HAP-1 (cell line): ENCODE measurements at regions of chr10 and their contacts with region 1.

Region 1: DNA sequence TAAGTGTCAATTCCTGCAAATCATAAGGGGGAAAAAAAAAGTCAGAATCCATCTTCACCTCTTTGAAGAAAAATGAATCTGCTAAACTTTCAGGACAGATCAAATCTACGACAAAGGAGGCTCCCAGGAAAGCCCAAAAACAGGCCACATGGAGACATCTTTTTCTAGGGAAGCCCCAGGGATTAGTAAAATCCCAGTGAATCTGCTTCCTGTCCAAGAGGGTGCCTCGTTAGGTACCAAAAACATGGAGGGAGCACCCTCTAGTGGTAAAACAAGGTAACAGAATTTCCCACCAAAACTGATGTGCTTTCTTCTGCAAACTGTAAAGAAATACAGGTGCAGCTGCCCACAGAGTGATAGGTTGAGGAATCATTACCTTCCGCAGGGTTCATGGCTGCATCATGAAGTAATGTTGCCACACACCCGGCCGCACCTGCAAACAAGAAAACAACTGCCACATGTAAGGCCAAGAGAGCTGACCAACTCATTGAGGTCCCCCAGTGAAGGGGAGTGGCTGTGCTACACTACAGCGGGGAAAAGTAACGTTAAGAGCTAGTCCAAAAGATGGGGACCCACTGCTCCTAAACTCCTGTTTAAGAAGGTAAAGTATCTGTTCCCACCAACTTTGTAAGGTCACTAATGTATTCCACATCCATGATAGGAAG is 7.9 kb downstream of the SLC25A28 start:
- DNase-seq: peak; percentile 65 to 66
- H3K4me3 ChIP-seq: no peak overlapping the region
- H3K4me1 ChIP-seq: peaks cover 7% of the 10 kb centered on the region
- H3K27me3 ChIP-seq: no peaks in the 10 kb centered on the region

Region 2: GRCh38 chr10:99394761-99395386 is 217.4 kb before region 1 on chr10:
- in situ Hi-C with region 1: loop called (anchors 5 kb)
- DNase-seq: no peak
- H3K4me3 ChIP-seq: no peak overlapping the region
- H3K4me1 ChIP-seq: no peaks in the 10 kb centered on the region
- H3K27me3 ChIP-seq: no peaks in the 10 kb centered on the region

Region 3: DNA sequence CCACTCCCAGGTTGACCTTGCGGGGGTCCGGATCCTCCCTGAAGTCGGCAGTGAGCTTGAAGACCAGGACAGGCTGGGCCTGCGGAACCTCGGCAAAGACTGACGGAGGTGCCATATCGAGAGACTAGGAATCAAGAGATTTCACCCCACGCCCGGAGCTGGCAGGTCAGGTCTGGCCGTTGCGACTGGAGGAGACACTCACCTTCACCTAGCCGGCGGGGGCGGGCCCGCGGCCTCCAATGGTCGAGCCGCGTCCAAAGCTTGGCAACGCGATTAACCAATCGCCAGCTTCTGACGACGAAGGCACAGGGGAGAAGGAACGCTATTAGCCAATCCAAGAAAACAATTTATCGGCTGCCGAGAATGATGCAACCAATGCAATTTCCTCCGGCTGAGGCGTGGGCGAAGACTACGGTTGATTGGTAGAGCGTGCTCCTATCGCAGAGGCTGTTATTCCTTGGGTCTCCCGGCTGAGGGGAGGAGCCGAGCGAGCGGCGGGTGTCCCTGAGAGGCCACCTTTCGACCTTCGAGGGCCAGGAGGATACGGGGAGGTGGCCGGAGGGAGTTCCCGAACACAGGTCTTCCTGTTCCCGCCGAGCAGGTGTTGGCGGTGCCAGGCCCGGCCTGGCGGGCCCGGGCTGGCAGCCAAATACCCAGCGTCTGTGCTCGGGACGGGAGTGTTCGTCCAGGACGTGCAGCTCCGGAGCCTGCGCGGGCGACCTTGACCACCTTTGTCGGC is 181.7 kb before region 1 on chr10 and contains the start of gene GOT1:
- in situ Hi-C with region 1: loop called (anchors 5 kb)
- DNase-seq: peak; percentile 95 to 99
- H3K4me3 ChIP-seq: peak within 1 kb of the TSS; percentile 89
- H3K4me1 ChIP-seq: peaks cover 9% of the 10 kb centered on the region
- H3K27me3 ChIP-seq: no peaks in the 10 kb centered on the region